AG04450 (cell line): ENCODE measurements at regions of chr11 and their contacts with region 1.

Region 1: GRCh38 chr11:72471005-72471898 is 36.9 kb upstream of the CLPB start:
- DNase-seq: peak; percentile 32
- H3K4me3 ChIP-seq: no peak overlapping the region
- H3K27ac ChIP-seq: no peak overlapping the region
- H3K27me3 ChIP-seq: peaks cover 28% of the 10 kb centered on the region
- CTCF ChIP-seq: peak; percentile 94

Region 2: DNA sequence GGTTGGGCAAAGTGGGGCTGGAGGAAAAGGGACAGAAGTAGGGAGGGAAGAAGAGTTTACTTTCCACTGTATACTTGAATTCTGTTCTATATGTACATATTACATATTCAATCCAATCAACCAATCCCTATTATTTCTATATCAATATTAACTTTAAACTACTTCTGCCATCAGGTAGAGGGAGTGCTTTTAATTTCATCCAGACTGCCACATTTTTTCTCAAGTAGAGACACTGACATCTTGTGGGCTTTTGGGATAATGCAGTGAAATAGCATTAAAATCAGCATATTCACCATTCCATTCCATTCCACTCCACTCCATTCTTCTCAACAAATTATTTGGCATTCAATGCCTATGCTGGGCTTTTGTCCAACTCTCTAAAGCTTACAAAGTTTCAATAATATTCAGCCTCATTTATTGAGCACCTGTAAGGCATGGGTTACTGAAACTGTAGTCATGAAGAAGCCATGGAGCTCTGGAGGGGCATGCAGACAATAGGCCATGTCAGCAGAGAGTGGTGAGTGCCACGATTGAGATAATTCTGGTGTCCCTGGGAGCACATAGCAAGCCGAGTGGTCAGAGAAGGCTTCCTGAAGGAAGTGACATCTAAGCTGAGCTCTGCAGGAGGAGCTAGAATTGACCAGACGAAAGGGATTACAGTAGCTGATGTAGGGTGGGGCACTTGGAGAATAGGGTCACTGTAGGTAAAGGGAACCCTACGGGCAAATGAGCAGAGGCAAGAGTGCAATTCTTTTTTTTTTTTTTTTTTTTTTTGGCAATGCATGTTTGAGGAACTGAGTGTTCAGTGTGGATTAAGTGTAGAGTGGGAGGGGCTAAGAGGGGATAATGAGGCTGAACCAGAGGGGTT is 24.1 kb before region 1 on chr11:
- CTCF ChIA-PET with region 1: interaction called, 16 read pairs
- POLR2A ChIA-PET with region 1: no interaction called
- DNase-seq: peak; percentile 24
- H3K4me3 ChIP-seq: no peak overlapping the region
- H3K27ac ChIP-seq: no peak overlapping the region
- H3K27me3 ChIP-seq: peaks cover 7% of the 10 kb centered on the region
- CTCF ChIP-seq: peak; percentile 82

Region 3: GRCh38 chr11:72460091-72460647 is 11.1 kb before region 1 on chr11:
- CTCF ChIA-PET with region 1: interaction called, 23 read pairs
- POLR2A ChIA-PET with region 1: no interaction called
- DNase-seq: no peak
- H3K4me3 ChIP-seq: no peak overlapping the region
- H3K27ac ChIP-seq: no peak overlapping the region
- H3K27me3 ChIP-seq: peaks cover 39% of the 10 kb centered on the region
- CTCF ChIP-seq: no peak

Region 4: GRCh38 chr11:72493426-72494108 is 22.3 kb after region 1 on chr11:
- CTCF ChIA-PET with region 1: interaction called, 23 read pairs
- POLR2A ChIA-PET with region 1: no interaction called
- DNase-seq: no peak
- H3K4me3 ChIP-seq: no peak overlapping the region
- H3K27ac ChIP-seq: no peak overlapping the region
- H3K27me3 ChIP-seq: peaks cover 8% of the 10 kb centered on the region
- CTCF ChIP-seq: no peak

Region 5: GRCh38 chr11:72573072-72573854 is 102.0 kb after region 1 on chr11:
- CTCF ChIA-PET with region 1: interaction called, 26 read pairs
- POLR2A ChIA-PET with region 1: no interaction called
- DNase-seq: no peak
- H3K4me3 ChIP-seq: no peak overlapping the region
- H3K27ac ChIP-seq: no peak overlapping the region
- H3K27me3 ChIP-seq: peaks cover 6% of the 10 kb centered on the region
- CTCF ChIP-seq: peak; percentile 59

Region 6: DNA sequence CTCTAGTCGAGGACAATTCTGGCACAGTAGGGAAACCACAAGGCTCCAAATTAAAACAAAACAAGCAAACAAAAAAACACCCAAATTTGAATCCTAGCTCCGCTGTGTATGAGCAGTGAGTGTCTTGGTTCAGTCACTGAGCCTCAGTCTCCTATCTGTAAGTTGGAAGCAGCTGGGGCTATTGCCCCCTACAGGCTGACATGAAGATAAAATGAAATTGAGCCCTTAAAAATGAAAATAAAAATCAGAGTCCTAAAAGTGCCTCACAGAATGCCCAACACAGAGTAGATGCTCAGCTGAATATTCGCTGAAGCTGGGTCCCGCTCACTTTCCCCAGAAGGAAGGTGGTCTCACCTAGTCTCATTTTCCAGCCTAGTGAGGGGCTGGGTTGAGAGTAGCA is 137.8 kb after region 1 on chr11:
- CTCF ChIA-PET with region 1: interaction called, 14 read pairs
- POLR2A ChIA-PET with region 1: no interaction called
- DNase-seq: no peak
- H3K4me3 ChIP-seq: no peak overlapping the region
- H3K27ac ChIP-seq: no peak overlapping the region
- H3K27me3 ChIP-seq: peaks cover 57% of the 10 kb centered on the region
- CTCF ChIP-seq: peak; percentile 67

Region 7: GRCh38 chr11:72683782-72684200 is 212.5 kb after region 1 on chr11:
- CTCF ChIA-PET with region 1: interaction called, 69 read pairs
- POLR2A ChIA-PET with region 1: no interaction called
- DNase-seq: no peak
- H3K4me3 ChIP-seq: no peak overlapping the region
- H3K27ac ChIP-seq: no peak overlapping the region
- H3K27me3 ChIP-seq: peaks cover 8% of the 10 kb centered on the region
- CTCF ChIP-seq: peak; percentile 91